CD4-positive, alpha-beta memory T cell (primary cell): ENCODE measurements at regions of chr12 and their contacts with region 1.

Region 1: GRCh38 chr12:6423267-6424007 is 21.3 kb upstream of the CD27 start:
- DNase-seq: peak; percentile 83 to 86 (median 85)
- H3K4me3 ChIP-seq: no peak overlapping the region
- H3K4me3 Mint-ChIP-seq: peak overlapping the region in 6 of 8 donors; percentile 12 to 56 (median 31)
- H3K27ac ChIP-seq: peak overlapping the region; percentile 8
- H3K27ac Mint-ChIP-seq: peak overlapping the region; percentile 68 to 90 (median 82)
- H3K4me1 ChIP-seq: peaks cover 42% of the 10 kb centered on the region
- H3K4me1 Mint-ChIP-seq: peaks cover 28 to 38% (median 33%) of the 10 kb centered on the region in 4 donors
- H3K27me3 ChIP-seq: no peaks in the 10 kb centered on the region
- H3K27me3 Mint-ChIP-seq: peaks cover 0 to 6% of the 10 kb centered on the region in 2 donors

Region 2: GRCh38 chr12:6443361-6443983 is 20.0 kb after region 1 on chr12:
- CTCF ChIA-PET with region 1: interaction called, 31 read pairs
- POLR2A ChIA-PET with region 1: interaction called, 84 read pairs
- intact Hi-C with region 1: loop called (anchors 1 kb)
- DNase-seq: no peak
- H3K4me3 ChIP-seq: no peak overlapping the region
- H3K4me3 Mint-ChIP-seq: peak overlapping the region; percentile 83 to 99 (median 96)
- H3K27ac ChIP-seq: peak overlapping the region; percentile 41
- H3K27ac Mint-ChIP-seq: peak overlapping the region; percentile 80 to 99 (median 92)
- H3K4me1 ChIP-seq: peaks cover 37% of the 10 kb centered on the region
- H3K4me1 Mint-ChIP-seq: peaks cover 28 to 64% (median 40%) of the 10 kb centered on the region in 4 donors
- H3K27me3 ChIP-seq: no peaks in the 10 kb centered on the region
- H3K27me3 Mint-ChIP-seq: no peaks in the 10 kb centered on the region

Region 3: DNA sequence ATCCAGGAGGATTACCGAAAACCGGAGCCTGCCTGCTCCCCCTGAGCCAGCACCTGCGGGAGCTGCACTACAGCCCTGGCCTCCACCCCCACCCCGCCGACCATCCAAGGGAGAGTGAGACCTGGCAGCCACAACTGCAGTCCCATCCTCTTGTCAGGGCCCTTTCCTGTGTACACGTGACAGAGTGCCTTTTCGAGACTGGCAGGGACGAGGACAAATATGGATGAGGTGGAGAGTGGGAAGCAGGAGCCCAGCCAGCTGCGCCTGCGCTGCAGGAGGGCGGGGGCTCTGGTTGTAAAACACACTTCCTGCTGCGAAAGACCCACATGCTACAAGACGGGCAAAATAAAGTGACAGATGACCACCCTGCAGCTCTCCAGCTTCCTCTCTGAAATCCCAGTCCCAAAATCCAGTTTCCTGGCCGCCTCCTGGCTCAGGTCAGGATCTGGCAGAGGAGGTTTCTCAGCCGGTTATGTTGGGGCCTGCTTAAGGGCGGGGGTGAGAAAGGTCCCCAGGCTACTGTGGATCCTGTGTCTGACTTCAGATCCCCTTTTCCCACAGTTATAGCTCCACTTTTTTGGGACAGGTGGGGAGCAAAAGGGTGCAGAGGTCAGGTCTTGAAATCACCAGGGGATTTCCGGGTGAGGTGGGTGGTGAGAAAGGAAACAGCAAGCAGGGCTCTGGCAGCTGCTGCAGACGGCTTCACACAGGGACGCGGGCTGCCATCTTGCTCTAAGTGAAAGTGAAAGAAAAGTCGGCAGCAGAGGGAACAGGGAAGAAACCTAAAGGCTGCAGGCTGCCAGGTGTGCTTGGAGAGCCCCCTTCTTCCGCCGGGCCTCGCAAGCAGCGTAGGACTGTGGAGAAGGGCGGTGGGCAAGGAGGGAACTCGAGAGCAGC is 28.2 kb after region 1 on chr12 and contains the start of gene TAPBPL:
- CTCF ChIA-PET with region 1: interaction called, 15 read pairs
- POLR2A ChIA-PET with region 1: interaction called, 84 read pairs
- intact Hi-C with region 1: no loop called
- DNase-seq: peak; percentile 85 to 94 (median 86)
- H3K4me3 ChIP-seq: peak within 1 kb of the TSS; percentile 80
- H3K4me3 Mint-ChIP-seq: peak within 1 kb of the TSS; percentile 96 to 100 (median 98)
- H3K27ac ChIP-seq: peak within 1 kb of the TSS; percentile 99
- H3K27ac Mint-ChIP-seq: peak within 1 kb of the TSS; percentile 95 to 99 (median 99)
- H3K4me1 ChIP-seq: peaks cover 68% of the 10 kb centered on the region
- H3K4me1 Mint-ChIP-seq: peaks cover 45 to 79% (median 64%) of the 10 kb centered on the region in 4 donors
- H3K27me3 ChIP-seq: no peaks in the 10 kb centered on the region
- H3K27me3 Mint-ChIP-seq: no peaks in the 10 kb centered on the region
- total RNA-seq, gene TAPBPL: 66.4 to 66.9 TPM

Region 4: GRCh38 chr12:6493497-6494257 is 70.2 kb after region 1 on chr12 and contains the start of gene NCAPD2:
- CTCF ChIA-PET with region 1: interaction called, 6 read pairs
- POLR2A ChIA-PET with region 1: interaction called, 6 read pairs
- intact Hi-C with region 1: loop called (anchors 1 kb)
- DNase-seq: peak; percentile 96 to 97 (median 96)
- H3K4me3 ChIP-seq: peak within 1 kb of the TSS; percentile 98 to 99
- H3K4me3 Mint-ChIP-seq: peak within 1 kb of the TSS; percentile 89 to 98 (median 96)
- H3K27ac ChIP-seq: peak within 1 kb of the TSS; percentile 87
- H3K27ac Mint-ChIP-seq: peak within 1 kb of the TSS; percentile 90 to 99 (median 97)
- H3K4me1 ChIP-seq: peaks cover 37% of the 10 kb centered on the region
- H3K4me1 Mint-ChIP-seq: peaks cover 26 to 46% (median 35%) of the 10 kb centered on the region in 4 donors
- H3K27me3 ChIP-seq: no peaks in the 10 kb centered on the region
- H3K27me3 Mint-ChIP-seq: no peaks in the 10 kb centered on the region
- total RNA-seq, gene NCAPD2: 38.1 to 39.8 TPM

Region 5: GRCh38 chr12:6554168-6555017 is 131.0 kb after region 1 on chr12:
- CTCF ChIA-PET with region 1: interaction called, 19 read pairs
- POLR2A ChIA-PET with region 1: interaction called, 4 read pairs
- intact Hi-C with region 1: loop called (anchors 1 kb)
- DNase-seq: peak; percentile 60 to 79 (median 63)
- H3K4me3 ChIP-seq: peak overlapping the region; percentile 71 to 73
- H3K4me3 Mint-ChIP-seq: peak overlapping the region; percentile 81 to 96 (median 88)
- H3K27ac ChIP-seq: peak overlapping the region; percentile 48
- H3K27ac Mint-ChIP-seq: peak overlapping the region; percentile 14 to 89 (median 70)
- H3K4me1 ChIP-seq: peaks cover 57% of the 10 kb centered on the region
- H3K4me1 Mint-ChIP-seq: peaks cover 28 to 64% (median 45%) of the 10 kb centered on the region in 4 donors
- H3K27me3 ChIP-seq: no peaks in the 10 kb centered on the region
- H3K27me3 Mint-ChIP-seq: no peaks in the 10 kb centered on the region